Activated naive CD8-positive, alpha-beta T cell treated with anti-CD3 and anti-CD28 coated beads, Interleukin-2, amount 10 ng/mL, durations not matched to agents 7 days and 5 days (primary cell): ENCODE measurements at regions of chr17 and their contacts with region 1.

Region 1: DNA sequence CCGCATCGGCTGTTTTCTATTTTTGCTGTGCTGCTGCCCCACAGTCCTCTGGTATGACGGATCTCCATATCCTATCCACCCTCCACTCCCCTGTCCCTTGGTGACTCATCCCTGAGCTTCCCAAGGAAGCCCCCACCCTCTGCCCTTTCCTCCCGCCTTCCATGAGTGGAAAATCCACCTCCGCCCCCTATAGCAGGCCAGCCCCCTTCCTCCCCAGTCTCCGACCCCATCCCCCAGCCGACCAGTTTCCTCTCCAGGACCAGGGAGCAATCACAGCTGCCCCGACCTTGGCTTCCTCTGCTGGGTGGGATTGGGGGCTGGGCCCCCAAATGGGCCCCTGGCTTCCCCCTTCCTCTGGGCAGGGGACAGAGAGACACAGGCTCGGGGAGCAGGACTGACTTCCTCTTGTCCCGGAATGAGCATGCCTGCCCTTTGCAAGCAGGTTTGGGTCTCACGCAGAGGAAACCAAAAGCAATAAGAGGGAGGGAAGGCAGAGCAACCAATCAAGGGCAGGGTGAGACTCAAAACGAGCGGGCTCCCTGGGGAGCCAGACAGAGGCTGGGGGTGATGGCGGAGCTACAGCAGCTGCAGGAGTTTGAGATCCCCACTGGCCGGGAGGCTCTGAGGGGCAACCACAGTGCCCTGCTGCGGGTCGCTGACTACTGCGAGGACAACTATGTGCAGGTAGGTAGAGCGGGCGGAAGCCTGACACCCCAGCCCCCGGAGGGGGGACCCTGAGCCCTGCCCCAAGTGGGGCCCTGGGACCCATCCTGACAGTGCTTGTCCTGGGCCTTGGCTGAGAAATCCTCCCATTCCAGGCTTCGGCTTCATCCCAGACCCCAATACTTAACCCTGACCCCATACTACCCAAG is at the starts of genes ABI3 and GNGT2:
- DNase-seq: peak; percentile 70
- ATAC-seq: peak; percentile 87
- H3K4me3 Mint-ChIP-seq: peak within 1 kb of the TSS; percentile 99
- H3K27ac Mint-ChIP-seq: peak within 1 kb of the TSS; percentile 88
- H3K4me1 Mint-ChIP-seq: peaks cover 47% of the 10 kb centered on the region
- H3K27me3 Mint-ChIP-seq: no peaks in the 10 kb centered on the region
- total RNA-seq, gene ABI3: 86.4 to 86.7 TPM
- total RNA-seq, gene GNGT2: 27.9 to 34.2 TPM

Region 2: DNA sequence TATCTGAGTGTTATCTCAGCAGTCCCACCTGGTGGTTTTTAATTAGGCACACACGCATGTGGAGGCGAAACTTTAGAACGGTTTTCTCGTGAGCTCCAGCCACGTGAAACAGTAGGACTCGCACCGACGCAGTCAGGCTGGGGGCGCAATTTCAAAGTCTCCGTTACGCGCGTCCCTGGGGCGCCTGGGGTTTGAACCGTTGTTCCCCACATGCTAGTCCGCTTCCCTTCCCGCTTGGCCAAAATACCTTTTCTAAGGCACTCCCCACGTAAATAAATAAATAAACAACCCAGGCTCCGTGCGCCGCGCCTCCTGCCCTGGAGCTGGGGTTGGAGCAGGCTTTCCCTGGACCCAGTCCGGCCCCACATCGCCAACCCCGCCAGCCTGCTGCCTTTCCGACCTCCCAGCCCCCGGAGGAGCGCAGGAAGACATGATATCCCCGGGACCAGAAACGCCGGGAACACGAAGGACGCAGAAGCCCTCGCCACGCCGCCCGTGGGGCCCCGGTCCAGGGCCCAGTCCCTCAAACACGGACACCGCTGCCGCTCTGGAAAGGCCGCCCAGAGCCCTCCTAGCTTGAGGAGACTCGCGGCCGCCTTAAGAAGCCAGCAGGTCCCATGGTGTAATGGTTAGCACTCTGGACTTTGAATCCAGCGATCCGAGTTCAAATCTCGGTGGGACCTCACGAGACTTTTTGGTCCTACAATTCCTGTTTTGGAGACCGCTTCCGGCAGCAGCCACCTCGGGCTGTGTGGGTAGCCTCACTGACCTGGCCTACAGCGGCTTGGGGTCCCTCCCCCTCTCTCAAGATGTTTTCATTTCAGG is 18.3 kb before region 1 on chr17:
- POLR2A ChIA-PET with region 1: interaction called, 120 read pairs
- DNase-seq: peak; percentile 96
- ATAC-seq: peak; percentile 50
- H3K4me3 Mint-ChIP-seq: peak overlapping the region; percentile 91
- H3K27ac Mint-ChIP-seq: peak overlapping the region; percentile 100
- H3K4me1 Mint-ChIP-seq: peaks cover 34% of the 10 kb centered on the region
- H3K27me3 Mint-ChIP-seq: peaks cover 1% of the 10 kb centered on the region

Region 3: DNA sequence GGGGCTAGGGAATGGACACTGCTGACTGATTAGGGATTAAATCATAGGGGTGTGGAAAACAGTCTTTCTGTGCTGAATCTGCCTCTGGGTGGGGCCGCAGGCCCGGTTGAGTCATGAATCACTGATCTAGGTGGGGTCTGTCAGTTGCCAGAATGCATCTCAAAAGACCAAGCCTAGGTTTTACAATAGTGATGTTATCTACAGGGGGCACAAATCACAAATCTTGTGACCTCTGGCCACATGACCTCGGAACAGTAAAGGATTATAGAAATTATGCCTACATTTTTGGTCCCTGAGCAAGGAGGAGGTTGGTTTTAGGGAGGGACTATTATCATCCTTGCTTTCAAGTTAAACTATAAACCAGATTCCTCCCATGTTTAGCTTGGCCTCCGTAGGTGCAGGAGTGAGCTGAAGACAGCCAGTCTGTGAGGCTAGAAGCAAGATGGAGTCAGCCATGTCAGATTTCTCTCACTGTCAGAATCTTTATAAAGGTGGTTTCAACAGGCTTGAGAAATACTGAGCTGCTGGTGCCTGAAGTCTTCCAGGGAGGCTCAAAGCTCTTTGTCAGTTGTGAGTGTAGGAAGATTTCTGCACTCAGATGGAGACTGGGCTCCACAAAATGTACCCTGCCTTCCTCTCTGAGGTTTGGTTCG is 12.9 kb before region 1 on chr17:
- POLR2A ChIA-PET with region 1: interaction called, 120 read pairs
- DNase-seq: peak; percentile 9
- ATAC-seq: no peak
- H3K4me3 Mint-ChIP-seq: no peak overlapping the region
- H3K27ac Mint-ChIP-seq: no peak overlapping the region
- H3K4me1 Mint-ChIP-seq: peaks cover 29% of the 10 kb centered on the region
- H3K27me3 Mint-ChIP-seq: no peaks in the 10 kb centered on the region

Region 4: GRCh38 chr17:49227436-49228261 is 17.3 kb after region 1 on chr17:
- POLR2A ChIA-PET with region 1: interaction called, 99 read pairs
- DNase-seq: peak; percentile 76
- ATAC-seq: peak; percentile 28
- H3K4me3 Mint-ChIP-seq: no peak overlapping the region
- H3K27ac Mint-ChIP-seq: no peak overlapping the region
- H3K4me1 Mint-ChIP-seq: peaks cover 32% of the 10 kb centered on the region
- H3K27me3 Mint-ChIP-seq: peaks cover 16% of the 10 kb centered on the region

Region 5: DNA sequence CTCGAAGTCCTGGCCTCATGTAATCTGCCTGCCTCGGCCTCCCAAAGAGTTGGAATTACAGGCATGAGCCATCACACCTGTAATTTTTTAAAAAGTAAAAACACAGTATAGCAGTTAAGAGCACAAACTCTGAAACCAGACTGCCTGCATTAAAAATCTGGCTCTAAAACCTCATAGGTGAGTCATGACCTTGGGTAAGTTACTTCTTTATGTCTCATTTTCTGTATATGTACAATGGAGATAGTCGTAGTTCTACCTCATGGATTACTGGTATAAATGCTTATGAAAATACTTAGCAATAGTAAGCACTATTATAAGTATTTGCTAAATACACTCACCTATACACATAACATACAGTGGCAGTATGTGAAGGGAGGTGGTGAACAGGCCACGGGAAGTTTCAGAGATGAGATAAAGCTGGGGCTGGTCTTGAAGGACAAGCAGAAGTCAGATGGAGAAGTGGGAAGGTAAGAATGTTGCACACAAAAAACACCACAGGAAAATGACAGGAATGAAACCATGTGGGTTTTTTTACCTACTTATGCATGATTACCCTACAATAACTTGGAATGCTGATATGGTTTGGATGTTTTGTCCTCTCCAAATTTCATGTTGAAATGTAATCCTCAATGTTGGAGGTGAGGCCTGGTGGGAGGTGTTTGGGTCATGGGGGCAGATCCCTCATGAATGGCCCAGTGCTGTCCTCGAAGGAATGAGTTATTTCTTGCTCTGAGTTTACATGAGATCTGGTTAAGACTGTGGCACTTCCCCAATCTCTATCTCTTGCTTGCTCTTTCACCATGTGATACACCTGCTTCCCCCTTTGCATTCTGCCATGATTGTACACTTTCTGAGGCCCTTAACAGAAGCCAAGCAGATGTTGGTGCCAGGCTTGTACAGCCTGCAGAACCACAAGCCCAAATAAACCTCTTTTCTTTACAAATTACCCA is 117.7 kb after region 1 on chr17:
- POLR2A ChIA-PET with region 1: no interaction called
- DNase-seq: no peak
- ATAC-seq: no peak
- H3K4me3 Mint-ChIP-seq: no peak overlapping the region
- H3K27ac Mint-ChIP-seq: no peak overlapping the region
- H3K4me1 Mint-ChIP-seq: peaks cover 33% of the 10 kb centered on the region
- H3K27me3 Mint-ChIP-seq: no peaks in the 10 kb centered on the region